ENCODE measurements at regions of chr19 and their contacts with region 1.

Region 1: DNA sequence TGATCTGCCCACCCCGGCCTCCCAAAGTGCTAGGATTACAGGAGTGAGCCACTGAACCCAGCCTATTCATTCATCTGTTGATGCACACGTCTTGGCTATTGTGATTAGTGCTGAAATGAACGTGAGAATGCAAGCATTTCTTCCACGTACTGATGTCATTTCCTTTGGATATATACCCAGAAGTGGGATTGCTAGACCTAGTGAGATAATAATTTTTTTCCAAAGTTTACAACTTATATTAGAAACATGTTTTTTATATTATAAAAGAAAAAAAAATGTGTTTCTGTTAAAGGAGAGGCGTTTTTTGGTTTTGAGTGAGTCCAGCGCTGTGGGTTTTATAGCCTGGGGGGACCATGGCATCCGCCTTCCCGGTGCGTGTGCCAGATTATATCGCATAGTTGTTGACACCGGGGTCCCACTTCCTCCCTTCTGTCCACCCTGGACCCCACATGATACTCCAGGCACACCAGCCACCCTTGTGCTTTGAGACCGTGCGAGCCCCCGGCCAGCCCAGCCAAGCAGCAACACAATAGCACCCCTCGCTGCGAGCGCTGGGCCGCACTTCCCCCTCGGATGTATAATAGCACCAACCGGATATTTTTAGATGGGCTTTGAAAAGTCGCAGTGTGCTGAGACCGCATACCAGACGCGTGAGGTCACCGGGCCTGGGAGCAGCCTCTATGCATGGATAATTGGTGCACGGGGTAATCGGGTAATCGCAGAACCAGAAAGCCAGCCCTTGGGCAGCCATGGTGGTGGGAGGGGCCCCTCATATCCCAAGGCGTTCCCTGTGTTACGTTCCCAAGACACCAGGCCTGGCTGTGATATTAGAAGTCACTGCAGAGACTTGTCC is 59.6 kb downstream of the MYO9B start:
- DNase-seq: peak; percentile 94
- H3K4me3 ChIP-seq: peak overlapping the region; percentile 51
- H3K27ac ChIP-seq: peak overlapping the region; percentile 98
- H3K4me1 ChIP-seq: peaks cover 54% of the 10 kb centered on the region
- H3K27me3 ChIP-seq: no peaks in the 10 kb centered on the region
- CTCF ChIP-seq: peak; percentile 63

Region 2: GRCh38 chr19:17079710-17080439 is 55.4 kb before region 1 on chr19:
- intact Hi-C with region 1: loop called (anchors 5 kb)
- DNase-seq: peak; percentile 61
- H3K4me3 ChIP-seq: peak overlapping the region; percentile 46
- H3K27ac ChIP-seq: peak overlapping the region; percentile 76
- H3K4me1 ChIP-seq: peaks cover 77% of the 10 kb centered on the region
- H3K27me3 ChIP-seq: no peaks in the 10 kb centered on the region
- CTCF ChIP-seq: peak; percentile 70

Measured in left ventricle myocardium inferior (tissue), 1 donor.